Activated CD4-positive, alpha-beta T cell treated with anti-CD3 and anti-CD28 coated beads, Interleukin-2, amount 10 ng/mL, durations not matched to agents 7 days and 5 days (primary cell): ENCODE measurements at regions of chr1 and their contacts with region 1.

Region 1: DNA sequence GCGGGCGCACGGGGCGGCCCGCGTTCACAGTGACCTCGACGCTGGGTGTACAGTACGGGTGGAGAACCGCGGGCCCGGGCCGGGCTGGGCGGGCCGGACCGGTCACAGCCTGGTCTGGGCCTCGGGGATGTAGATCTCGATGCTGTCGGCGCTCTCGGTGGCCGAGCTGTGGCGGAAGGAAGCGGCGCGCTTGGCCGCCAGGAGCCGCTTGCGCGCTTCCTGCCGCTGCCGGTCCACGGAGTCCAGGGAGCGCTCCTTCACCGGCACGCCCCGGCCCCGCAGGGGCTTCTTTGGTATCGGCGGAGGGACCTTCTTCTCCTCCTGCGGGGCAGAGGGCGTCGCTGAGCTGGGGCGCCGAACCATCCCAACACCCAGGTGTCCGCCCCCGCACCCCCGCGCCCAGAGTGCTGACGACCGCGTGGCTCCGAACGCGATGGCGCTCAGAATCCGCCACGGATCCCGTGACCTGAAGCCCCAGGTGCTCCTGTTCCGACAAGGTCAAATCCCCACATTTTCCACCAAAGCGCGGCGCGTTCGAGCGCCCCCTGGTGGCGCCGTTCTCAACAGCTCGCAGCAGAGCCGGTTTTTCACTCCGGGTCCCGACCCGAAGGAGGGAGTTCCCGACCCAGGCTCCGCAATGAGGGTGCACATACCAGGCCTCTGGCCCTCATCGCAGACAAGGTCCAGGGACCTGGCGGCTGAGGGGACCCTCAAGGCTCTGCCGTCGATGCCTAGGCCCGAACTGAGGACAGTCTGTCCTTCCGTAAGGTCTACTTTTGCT is 6.6 kb upstream of the SMIM12 start:
- DNase-seq: peak; percentile 90
- H3K4me3 Mint-ChIP-seq: peak overlapping the region; percentile 77
- H3K27ac Mint-ChIP-seq: peak overlapping the region; percentile 90
- H3K4me1 Mint-ChIP-seq: peaks cover 37% of the 10 kb centered on the region
- H3K27me3 Mint-ChIP-seq: peaks cover 5% of the 10 kb centered on the region

Region 2: DNA sequence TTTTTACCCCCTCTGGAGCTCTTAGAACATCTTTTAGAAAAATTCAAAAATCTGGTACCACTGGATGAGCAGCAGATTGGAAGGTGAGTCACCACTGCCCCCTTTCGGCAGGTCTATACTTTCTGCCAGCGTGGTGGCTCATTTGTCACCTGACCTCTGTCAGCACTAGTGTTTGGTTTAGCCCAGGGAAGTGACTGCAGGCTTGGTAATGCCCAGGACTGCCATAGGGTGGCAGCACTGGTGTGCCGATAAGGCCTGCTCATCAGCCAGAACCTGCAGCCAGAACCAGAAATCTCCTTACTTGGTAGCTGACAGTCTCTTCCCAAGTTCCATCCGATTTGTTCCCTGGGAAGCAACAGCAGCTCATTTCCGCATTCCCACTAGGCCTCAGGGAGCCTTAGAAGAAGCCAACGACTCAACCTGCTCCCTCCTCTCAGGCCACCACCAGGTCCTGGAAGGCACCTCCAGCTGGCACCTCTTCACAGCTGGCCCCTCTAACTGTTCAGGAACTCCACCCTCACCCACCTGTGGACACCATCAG is 13.4 kb before region 1 on chr1:
- CTCF ChIA-PET with region 1: interaction called, 47 read pairs
- POLR2A ChIA-PET with region 1: interaction called, 3 read pairs
- DNase-seq: peak; percentile 94
- H3K4me3 Mint-ChIP-seq: no peak overlapping the region
- H3K27ac Mint-ChIP-seq: peak overlapping the region; percentile 3
- H3K4me1 Mint-ChIP-seq: peaks cover 22% of the 10 kb centered on the region
- H3K27me3 Mint-ChIP-seq: no peaks in the 10 kb centered on the region

Region 3: DNA sequence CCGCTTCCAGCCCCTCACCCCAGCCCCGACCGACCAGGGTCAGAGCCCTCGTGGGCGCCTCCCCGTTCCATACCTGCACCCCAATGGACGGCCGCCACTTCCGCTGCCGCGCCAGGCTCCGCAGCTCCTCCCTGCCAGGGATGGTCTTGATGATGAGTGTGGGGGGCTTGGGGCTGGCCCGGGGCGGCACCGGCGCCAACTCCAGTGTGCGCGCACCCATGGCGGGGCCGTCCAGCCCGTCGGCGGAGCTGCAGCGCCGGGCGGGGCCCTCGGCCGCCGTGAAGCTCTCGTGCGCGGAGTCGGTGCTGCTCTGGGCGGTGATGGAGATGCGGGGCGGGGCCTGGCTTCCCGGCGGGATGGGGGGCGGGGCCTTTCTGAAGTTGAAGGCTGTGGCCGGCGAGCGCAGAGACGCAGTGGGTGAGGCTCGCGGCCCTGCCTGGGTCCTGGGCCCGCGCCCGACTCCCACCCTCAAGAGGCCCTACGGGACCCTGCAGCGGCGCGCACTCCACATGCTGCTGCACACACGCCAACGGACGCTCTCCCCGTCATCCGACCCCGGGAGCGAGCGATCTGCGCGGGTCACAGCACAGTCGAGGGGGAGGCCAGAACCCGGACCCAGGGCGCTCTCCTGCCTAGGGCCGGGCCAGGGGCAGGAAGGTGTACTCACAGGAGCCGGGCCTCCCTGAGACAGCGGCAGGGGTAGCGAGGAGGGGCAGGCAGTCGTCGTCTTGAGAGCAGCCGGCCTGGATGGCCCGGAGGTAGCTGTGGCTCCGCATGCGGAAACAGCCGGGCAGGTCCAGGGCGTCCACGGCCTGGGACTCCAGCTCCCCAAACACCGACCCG is 19.5 kb after region 1 on chr1:
- CTCF ChIA-PET with region 1: interaction called, 10 read pairs
- POLR2A ChIA-PET with region 1: no interaction called
- DNase-seq: peak; percentile 44
- H3K4me3 Mint-ChIP-seq: peak overlapping the region; percentile 16
- H3K27ac Mint-ChIP-seq: no peak overlapping the region
- H3K4me1 Mint-ChIP-seq: peaks cover 3% of the 10 kb centered on the region
- H3K27me3 Mint-ChIP-seq: peaks cover 51% of the 10 kb centered on the region